Posterior cingulate gyrus (tissue), 11 donors: ENCODE measurements at regions of chr10 and their contacts with region 1.

Region 1: GRCh38 chr10:85492684-85493083 is 873.9 kb downstream of the GRID1 start:
- DNase-seq: peak in 5 of 10 donors; percentile 6 to 68 (median 14)

Region 2: GRCh38 chr10:85318809-85319807 is 173.6 kb before region 1 on chr10:
- intact Hi-C with region 1: loop called (anchors 10 kb)
- DNase-seq: peak in 7 of 10 donors; percentile 10 to 81 (median 28)